Mammary epithelial cell (primary cell): ENCODE measurements at regions of chr6 and their contacts with region 1.

Region 1: GRCh38 chr6:126176282-126176681 is 163.6 kb upstream of the CENPW start:
- DNase-seq: peak; percentile 44
- H3K4me3 ChIP-seq: no peak overlapping the region
- H3K27ac ChIP-seq: no peak overlapping the region
- H3K4me1 ChIP-seq: peaks cover 8% of the 10 kb centered on the region
- H3K27me3 ChIP-seq: no peaks in the 10 kb centered on the region
- CTCF ChIP-seq: peak; percentile 41 to 55

Region 2: GRCh38 chr6:126312013-126312663 is 135.9 kb after region 1 on chr6:
- CTCF ChIA-PET with region 1: no interaction called
- dilution Hi-C with region 1: no loop called
- in situ Hi-C with region 1: no loop called
- intact Hi-C with region 1: loop called (anchors 1 kb)
- DNase-seq: peak; percentile 43
- H3K4me3 ChIP-seq: no peak overlapping the region
- H3K27ac ChIP-seq: no peak overlapping the region
- H3K4me1 ChIP-seq: no peaks in the 10 kb centered on the region
- H3K27me3 ChIP-seq: no peaks in the 10 kb centered on the region
- CTCF ChIP-seq: peak; percentile 49 to 50

Region 3: DNA sequence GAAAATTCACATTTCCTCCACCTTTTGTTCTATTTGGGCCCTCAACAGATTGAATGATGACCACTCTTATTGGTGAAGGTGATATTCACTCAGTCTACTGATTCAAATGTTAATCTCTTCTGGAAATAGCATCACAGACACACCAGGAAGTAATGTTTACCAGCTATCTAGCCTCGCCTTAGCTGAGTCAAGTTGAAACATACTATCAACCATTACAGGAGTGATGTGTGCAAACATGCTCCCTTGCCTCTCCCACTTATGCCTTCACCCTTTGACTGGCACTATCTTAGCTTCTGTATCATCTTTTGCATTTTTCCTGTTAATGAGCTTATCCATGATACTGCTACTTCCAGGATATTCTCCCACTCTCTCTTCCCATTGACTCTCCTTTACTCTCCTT is 355.6 kb after region 1 on chr6:
- CTCF ChIA-PET with region 1: no interaction called
- dilution Hi-C with region 1: no loop called
- in situ Hi-C with region 1: no loop called
- intact Hi-C with region 1: loop called (anchors 5 kb)
- DNase-seq: peak; percentile 2
- H3K4me3 ChIP-seq: no peak overlapping the region
- H3K27ac ChIP-seq: no peak overlapping the region
- H3K4me1 ChIP-seq: peaks cover 4% of the 10 kb centered on the region
- H3K27me3 ChIP-seq: no peaks in the 10 kb centered on the region
- CTCF ChIP-seq: no peak

Region 4: DNA sequence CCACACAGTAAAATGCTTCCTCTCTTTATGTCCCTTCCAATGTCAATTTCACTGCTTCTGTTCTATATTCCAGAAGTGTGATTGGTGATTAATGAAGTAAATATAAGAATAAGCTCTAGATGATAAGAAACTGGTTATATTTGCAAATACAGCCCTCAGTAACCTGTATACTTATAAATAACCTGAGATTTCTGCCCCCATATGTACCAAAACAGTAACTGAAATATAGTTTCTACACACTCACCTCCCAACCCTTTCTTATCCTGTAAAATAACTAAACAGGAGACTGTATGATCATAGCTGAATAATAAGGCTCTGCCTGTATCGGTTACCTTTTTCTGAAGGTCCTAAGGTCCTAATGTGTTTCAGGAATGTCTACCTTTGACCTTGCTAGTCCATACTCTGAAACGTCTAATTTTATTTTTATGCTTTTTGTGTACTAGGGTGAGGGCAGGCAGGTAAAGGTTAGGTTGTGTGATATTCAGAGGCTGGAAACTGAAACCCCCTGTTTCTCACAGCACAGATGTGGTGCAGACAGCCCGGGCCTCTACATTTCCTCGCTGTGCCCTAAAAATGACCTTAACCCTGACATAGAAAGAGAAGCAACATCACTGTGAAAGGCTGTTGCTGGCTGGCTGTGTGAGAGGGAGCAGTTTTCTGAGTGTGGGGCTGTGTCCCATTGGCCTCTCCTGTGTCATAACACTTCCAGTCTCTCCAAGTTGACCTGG is 542.5 kb after region 1 on chr6:
- CTCF ChIA-PET with region 1: no interaction called
- dilution Hi-C with region 1: no loop called
- in situ Hi-C with region 1: no loop called
- intact Hi-C with region 1: loop called (anchors 5 kb)
- DNase-seq: no peak
- H3K4me3 ChIP-seq: no peak overlapping the region
- H3K27ac ChIP-seq: no peak overlapping the region
- H3K4me1 ChIP-seq: peaks cover 7% of the 10 kb centered on the region
- H3K27me3 ChIP-seq: no peaks in the 10 kb centered on the region
- CTCF ChIP-seq: no peak